Activated T-helper 1 cell treated with anti-CD3 and anti-CD28 coated beads, Interleukin-12 subunit alpha, Interleukin-12 subunit beta, Interleukin-2, Interleukin-4 antibody, amounts not matched to agents 30 ng/mL and 10 ng/mL and 1 ng/mL, durations not matched to agents 14 hours and 24 hours and 36 hours (primary cell): ENCODE measurements at regions of chr4 and their contacts with region 1.

Region 1: GRCh38 chr4:184250795-184251669 is 33.4 kb upstream of the ENPP6 start:
- DNase-seq: no peak
- H3K4me3 Mint-ChIP-seq: peak overlapping the region; percentile 27
- H3K27ac Mint-ChIP-seq: peak overlapping the region; percentile 94
- H3K4me1 Mint-ChIP-seq: peaks cover 38% of the 10 kb centered on the region
- H3K27me3 Mint-ChIP-seq: peaks cover 1% of the 10 kb centered on the region

Region 2: GRCh38 chr4:183840311-183840710 is 410.7 kb before region 1 on chr4:
- intact Hi-C with region 1: loop called (anchors 1 kb)
- DNase-seq: peak; percentile 37
- H3K4me3 Mint-ChIP-seq: no peak overlapping the region
- H3K27ac Mint-ChIP-seq: no peak overlapping the region
- H3K4me1 Mint-ChIP-seq: peaks cover 6% of the 10 kb centered on the region
- H3K27me3 Mint-ChIP-seq: peaks cover 8% of the 10 kb centered on the region